Endothelial cell of umbilical vein (primary cell): ENCODE measurements at regions of chr12 and their contacts with region 1.

Region 1: DNA sequence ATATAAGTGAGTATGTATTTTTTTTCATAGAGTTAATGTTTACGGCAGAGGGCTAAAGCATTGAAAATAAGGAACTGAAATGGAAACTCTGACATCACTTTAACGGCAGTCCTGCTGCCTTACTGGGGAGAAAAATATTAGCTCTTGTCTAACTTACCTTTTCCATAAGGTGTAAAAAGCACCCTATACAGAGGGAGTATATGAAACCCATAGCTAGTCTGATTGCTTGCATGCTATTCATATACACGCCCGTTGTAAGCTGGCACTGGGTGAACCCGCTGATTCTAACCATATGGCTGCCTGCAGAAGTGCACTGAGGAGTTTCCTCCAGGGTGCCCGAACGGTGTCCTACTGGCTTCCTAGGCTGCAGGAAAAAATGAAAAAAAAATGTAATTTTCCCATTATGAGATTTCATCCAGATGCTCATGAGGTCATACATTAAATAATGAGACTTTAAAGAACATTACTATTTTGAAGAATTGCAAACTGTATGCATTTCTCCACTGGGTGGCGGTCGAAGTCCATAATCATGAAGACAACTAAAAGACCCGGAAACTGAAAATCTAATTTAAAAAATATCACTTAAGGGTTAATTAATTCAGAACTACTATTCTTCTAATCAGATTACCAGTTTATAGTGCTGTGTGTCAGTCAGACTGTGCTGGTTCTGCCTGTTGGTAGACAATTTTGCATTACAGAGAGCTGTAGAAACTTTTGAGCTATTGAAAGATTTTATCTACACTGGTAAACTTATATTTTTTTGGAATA is 144.7 kb downstream of the ALX1 start:
- DNase-seq: peak; percentile 31
- H3K4me3 ChIP-seq: no peak overlapping the region
- H3K27ac ChIP-seq: no peak overlapping the region
- H3K4me1 ChIP-seq: no peaks in the 10 kb centered on the region
- H3K27me3 ChIP-seq: no peaks in the 10 kb centered on the region
- CTCF ChIP-seq: peak; percentile 24
- POLR2A ChIP-seq: no peak

Region 2: GRCh38 chr12:85155787-85156186 is 269.0 kb before region 1 on chr12:
- CTCF ChIA-PET with region 1: interaction called, 5 read pairs
- POLR2A ChIA-PET with region 1: no interaction called
- dilution Hi-C with region 1: loop called (anchors 25 kb)
- intact Hi-C with region 1: no loop called
- DNase-seq: peak; percentile 67
- H3K4me3 ChIP-seq: no peak overlapping the region
- H3K27ac ChIP-seq: no peak overlapping the region
- H3K4me1 ChIP-seq: no peaks in the 10 kb centered on the region
- H3K27me3 ChIP-seq: no peaks in the 10 kb centered on the region
- CTCF ChIP-seq: peak in 1 of 2 donors; percentile 31
- POLR2A ChIP-seq: no peak

Region 3: DNA sequence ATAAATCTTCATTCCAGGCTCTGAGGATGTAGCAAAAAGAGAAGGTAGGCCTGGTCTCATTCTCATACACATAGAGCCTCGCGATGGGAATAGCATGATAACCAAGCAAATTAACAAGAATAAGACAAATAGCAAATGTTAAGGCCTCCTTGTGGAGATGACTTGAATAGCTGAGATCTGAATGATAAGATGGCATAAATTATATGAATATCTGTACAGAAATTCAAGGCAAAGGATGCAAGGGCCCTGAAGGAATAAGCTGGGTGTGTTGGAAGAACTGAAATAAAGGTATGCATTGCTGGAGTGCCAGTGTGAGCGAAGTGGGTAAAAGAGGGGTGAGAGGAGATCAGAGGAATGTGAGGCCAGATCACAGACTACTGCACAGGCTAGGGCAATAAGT is 29.9 kb before region 1 on chr12:
- CTCF ChIA-PET with region 1: no interaction called
- POLR2A ChIA-PET with region 1: no interaction called
- dilution Hi-C with region 1: no loop called
- intact Hi-C with region 1: no loop called
- DNase-seq: no peak
- H3K4me3 ChIP-seq: no peak overlapping the region
- H3K27ac ChIP-seq: no peak overlapping the region
- H3K4me1 ChIP-seq: no peaks in the 10 kb centered on the region
- H3K27me3 ChIP-seq: no peaks in the 10 kb centered on the region
- CTCF ChIP-seq: no peak
- POLR2A ChIP-seq: no peak

Region 4: GRCh38 chr12:85405781-85406522 is 18.8 kb before region 1 on chr12:
- CTCF ChIA-PET with region 1: interaction called, 12 read pairs
- POLR2A ChIA-PET with region 1: no interaction called
- dilution Hi-C with region 1: no loop called
- intact Hi-C with region 1: no loop called
- DNase-seq: no peak
- H3K4me3 ChIP-seq: no peak overlapping the region
- H3K27ac ChIP-seq: no peak overlapping the region
- H3K4me1 ChIP-seq: no peaks in the 10 kb centered on the region
- H3K27me3 ChIP-seq: no peaks in the 10 kb centered on the region
- CTCF ChIP-seq: no peak
- POLR2A ChIP-seq: no peak

Region 5: GRCh38 chr12:85441740-85442139 is 17.0 kb after region 1 on chr12:
- CTCF ChIA-PET with region 1: interaction called, 10 read pairs
- POLR2A ChIA-PET with region 1: no interaction called
- dilution Hi-C with region 1: no loop called
- intact Hi-C with region 1: no loop called
- DNase-seq: peak; percentile 52
- H3K4me3 ChIP-seq: no peak overlapping the region
- H3K27ac ChIP-seq: no peak overlapping the region
- H3K4me1 ChIP-seq: no peaks in the 10 kb centered on the region
- H3K27me3 ChIP-seq: no peaks in the 10 kb centered on the region
- CTCF ChIP-seq: peak in 1 of 2 donors; percentile 43
- POLR2A ChIP-seq: no peak

Region 6: DNA sequence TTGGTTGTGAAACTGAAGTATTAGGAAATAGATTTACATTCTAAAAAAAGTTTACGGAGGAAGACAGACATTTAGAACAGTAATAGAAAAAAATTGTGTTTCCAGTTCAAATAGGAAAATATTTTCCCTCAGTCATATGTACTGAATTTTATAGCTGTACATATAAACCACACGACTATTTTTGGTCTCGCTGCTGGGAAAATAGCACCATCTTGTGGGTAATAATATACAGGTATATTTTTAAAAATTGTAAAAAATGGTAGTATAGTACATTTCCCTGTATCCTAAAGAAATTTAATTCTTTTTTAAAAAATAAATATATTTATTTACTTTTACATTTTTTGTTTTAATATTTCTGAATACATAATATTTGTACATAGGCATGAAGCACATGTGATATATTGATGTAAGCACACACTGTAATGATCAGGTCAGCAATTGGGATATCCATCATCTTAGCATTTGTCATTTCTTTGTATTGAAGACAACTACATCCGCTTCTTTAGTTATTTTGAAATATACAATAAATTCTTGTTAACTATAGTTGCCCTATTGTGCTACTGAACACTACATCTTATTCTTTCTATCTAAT is 23.9 kb after region 1 on chr12:
- CTCF ChIA-PET with region 1: interaction called, 34 read pairs
- POLR2A ChIA-PET with region 1: no interaction called
- dilution Hi-C with region 1: no loop called
- intact Hi-C with region 1: loop called (anchors 1 kb)
- DNase-seq: peak; percentile 42
- H3K4me3 ChIP-seq: no peak overlapping the region
- H3K27ac ChIP-seq: no peak overlapping the region
- H3K4me1 ChIP-seq: no peaks in the 10 kb centered on the region
- H3K27me3 ChIP-seq: no peaks in the 10 kb centered on the region
- CTCF ChIP-seq: no peak
- POLR2A ChIP-seq: no peak

Region 7: GRCh38 chr12:85951823-85952222 is 527.1 kb after region 1 on chr12:
- CTCF ChIA-PET with region 1: interaction called, 17 read pairs
- POLR2A ChIA-PET with region 1: no interaction called
- dilution Hi-C with region 1: no loop called
- intact Hi-C with region 1: no loop called
- DNase-seq: peak; percentile 55
- H3K4me3 ChIP-seq: no peak overlapping the region
- H3K27ac ChIP-seq: no peak overlapping the region
- H3K4me1 ChIP-seq: peaks cover 4% of the 10 kb centered on the region
- H3K27me3 ChIP-seq: no peaks in the 10 kb centered on the region
- CTCF ChIP-seq: peak; percentile 17 to 25
- POLR2A ChIP-seq: no peak